Activated naive CD4-positive, alpha-beta T cell treated with anti-CD3 and anti-CD28 coated beads, Interleukin-2, amount 10 ng/mL, durations not matched to agents 7 days and 5 days (primary cell): ENCODE measurements at regions of chr2 and their contacts with region 1.

Region 1: GRCh38 chr2:70086838-70087701 is at the start of gene PCBP1:
- DNase-seq: peak; percentile 95
- H3K4me3 Mint-ChIP-seq: peak within 1 kb of the TSS; percentile 98
- H3K27ac Mint-ChIP-seq: peak within 1 kb of the TSS; percentile 100
- H3K4me1 Mint-ChIP-seq: peaks cover 64% of the 10 kb centered on the region
- H3K27me3 Mint-ChIP-seq: peaks cover 4% of the 10 kb centered on the region

Region 2: GRCh38 chr2:69754633-69755032 is 332.4 kb before region 1 on chr2:
- CTCF ChIA-PET with region 1: no interaction called
- DNase-seq: no peak
- H3K4me3 Mint-ChIP-seq: no peak overlapping the region
- H3K27ac Mint-ChIP-seq: no peak overlapping the region
- H3K4me1 Mint-ChIP-seq: peaks cover 21% of the 10 kb centered on the region
- H3K27me3 Mint-ChIP-seq: no peaks in the 10 kb centered on the region

Region 3: GRCh38 chr2:70070541-70071268 is 16.4 kb before region 1 on chr2:
- CTCF ChIA-PET with region 1: interaction called, 42 read pairs
- DNase-seq: peak; percentile 71
- H3K4me3 Mint-ChIP-seq: peak overlapping the region; percentile 42
- H3K27ac Mint-ChIP-seq: peak overlapping the region; percentile 96
- H3K4me1 Mint-ChIP-seq: peaks cover 65% of the 10 kb centered on the region
- H3K27me3 Mint-ChIP-seq: no peaks in the 10 kb centered on the region

Region 4: DNA sequence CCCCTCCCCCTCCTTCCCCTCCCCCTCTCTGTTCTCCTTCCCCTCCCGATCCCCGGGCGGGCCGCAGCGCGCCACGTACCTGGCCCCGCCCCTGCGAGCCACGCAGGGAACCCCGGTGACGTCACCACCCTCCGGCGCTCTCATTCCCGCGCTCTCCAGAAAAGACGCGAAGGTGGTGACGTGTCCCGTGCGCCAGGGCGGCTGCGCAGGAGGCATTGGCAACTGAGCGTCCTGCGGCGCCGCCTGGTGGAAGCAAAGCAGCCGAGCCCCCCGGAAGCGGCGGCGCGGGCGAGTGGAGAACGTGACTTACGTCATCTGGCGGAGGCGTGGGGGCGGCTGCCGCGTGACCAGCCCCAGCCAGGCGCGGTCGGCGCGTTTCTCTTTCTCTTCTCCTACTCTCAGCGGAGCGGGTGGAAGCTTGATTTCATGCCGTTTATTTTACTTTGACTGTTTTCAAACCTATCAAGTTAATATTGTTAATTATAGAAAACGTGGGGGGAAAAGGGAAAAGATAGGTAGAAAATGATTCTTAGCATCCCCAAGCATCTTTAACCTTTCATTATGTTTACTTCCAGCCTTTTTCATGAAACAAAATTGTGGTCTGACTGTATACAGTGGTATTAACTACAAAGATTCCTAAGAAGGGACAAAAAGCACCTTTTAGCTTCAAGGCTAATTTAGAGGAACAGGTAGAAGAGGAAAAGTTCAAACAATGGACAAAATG is 55.7 kb after region 1 on chr2:
- CTCF ChIA-PET with region 1: interaction called, 10 read pairs
- DNase-seq: peak; percentile 99
- H3K4me3 Mint-ChIP-seq: peak overlapping the region; percentile 81
- H3K27ac Mint-ChIP-seq: peak overlapping the region; percentile 98
- H3K4me1 Mint-ChIP-seq: peaks cover 81% of the 10 kb centered on the region
- H3K27me3 Mint-ChIP-seq: no peaks in the 10 kb centered on the region

Region 5: DNA sequence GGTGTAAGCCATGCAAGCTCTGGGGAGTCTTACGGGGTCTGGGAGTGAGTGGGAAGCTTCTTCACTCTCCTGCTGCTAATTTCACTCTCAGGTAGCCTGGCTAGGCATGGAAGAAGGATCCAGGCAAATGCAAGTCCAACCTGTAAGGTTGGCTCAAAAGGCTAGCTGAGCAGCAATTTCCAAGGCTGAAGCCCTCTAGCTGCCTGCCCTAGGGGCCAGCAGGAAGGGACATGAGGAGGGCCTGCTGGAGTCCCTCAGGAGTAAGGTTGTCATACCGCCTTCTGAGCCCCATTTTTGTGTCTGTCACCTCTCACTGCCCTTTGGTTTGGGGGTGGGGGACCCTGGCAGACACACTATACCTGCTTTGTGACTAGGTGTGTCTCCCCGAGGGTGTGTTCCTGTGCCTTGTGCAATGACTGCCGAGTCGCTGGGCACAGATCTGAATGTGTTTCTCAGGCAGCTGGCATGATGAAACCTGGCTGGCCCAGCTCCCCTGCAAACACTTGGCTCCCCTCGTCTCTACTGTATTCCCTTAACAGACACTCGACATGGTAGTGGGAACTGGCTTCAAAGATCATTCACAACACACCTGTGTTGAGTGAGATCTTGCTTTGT is 338.7 kb after region 1 on chr2:
- CTCF ChIA-PET with region 1: no interaction called
- DNase-seq: no peak
- H3K4me3 Mint-ChIP-seq: no peak overlapping the region
- H3K27ac Mint-ChIP-seq: no peak overlapping the region
- H3K4me1 Mint-ChIP-seq: no peaks in the 10 kb centered on the region
- H3K27me3 Mint-ChIP-seq: peaks cover 8% of the 10 kb centered on the region